A549 (cell line): ENCODE measurements at regions of chr1 and their contacts with region 1.

Region 1: DNA sequence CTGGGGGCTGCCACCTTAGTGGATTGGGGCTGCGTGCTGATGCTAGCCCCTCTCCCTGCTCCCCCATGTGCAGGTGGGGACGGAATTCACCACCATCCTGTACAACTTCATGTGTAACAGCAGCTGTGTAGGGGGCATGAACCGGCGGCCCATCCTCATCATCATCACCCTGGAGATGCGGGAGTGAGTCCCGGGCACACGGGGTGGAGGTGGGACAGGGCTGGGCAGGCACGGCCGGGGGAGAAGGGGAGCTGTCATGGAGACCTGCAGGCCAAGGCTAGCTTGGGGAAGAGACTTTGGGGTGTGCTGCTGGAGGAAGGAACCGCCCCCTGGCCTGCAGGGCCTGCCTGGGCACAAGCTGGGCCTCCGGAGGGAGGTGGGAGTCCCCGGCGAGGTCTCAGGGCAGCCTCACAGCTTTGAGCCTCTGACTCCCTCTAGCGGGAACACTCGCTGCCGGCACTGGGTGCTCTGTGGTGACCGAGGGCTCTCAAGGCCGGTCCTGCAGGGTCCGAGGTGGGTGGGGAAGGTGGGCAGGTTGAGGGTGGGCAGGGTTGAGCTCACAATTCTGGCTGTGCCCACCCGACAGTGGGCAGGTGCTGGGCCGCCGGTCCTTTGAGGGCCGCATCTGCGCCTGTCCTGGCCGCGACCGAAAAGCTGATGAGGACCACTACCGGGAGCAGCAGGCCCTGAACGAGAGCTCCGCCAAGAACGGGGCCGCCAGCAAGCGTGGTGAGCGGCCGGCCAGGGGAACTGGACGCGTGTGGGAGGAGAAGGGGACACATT is 25.0 kb upstream of the CCDC27 start:
- DNase-seq: peak; percentile 53 to 75
- ATAC-seq: peak; percentile 69 to 88
- H3K4me3 ChIP-seq: no peak overlapping the region
- H3K27ac ChIP-seq: no peak overlapping the region
- H3K4me1 ChIP-seq: no peaks in the 10 kb centered on the region
- CTCF ChIP-seq: peak; percentile 25; the same call in 2 of the 3 replicates
- EP300 ChIP-seq: no peak
- POLR2A ChIP-seq: no peak
- RAD21 ChIP-seq: peak in 1 of 2 experiments; percentile 32; a peak in 2 of 5 replicates

Region 2: DNA sequence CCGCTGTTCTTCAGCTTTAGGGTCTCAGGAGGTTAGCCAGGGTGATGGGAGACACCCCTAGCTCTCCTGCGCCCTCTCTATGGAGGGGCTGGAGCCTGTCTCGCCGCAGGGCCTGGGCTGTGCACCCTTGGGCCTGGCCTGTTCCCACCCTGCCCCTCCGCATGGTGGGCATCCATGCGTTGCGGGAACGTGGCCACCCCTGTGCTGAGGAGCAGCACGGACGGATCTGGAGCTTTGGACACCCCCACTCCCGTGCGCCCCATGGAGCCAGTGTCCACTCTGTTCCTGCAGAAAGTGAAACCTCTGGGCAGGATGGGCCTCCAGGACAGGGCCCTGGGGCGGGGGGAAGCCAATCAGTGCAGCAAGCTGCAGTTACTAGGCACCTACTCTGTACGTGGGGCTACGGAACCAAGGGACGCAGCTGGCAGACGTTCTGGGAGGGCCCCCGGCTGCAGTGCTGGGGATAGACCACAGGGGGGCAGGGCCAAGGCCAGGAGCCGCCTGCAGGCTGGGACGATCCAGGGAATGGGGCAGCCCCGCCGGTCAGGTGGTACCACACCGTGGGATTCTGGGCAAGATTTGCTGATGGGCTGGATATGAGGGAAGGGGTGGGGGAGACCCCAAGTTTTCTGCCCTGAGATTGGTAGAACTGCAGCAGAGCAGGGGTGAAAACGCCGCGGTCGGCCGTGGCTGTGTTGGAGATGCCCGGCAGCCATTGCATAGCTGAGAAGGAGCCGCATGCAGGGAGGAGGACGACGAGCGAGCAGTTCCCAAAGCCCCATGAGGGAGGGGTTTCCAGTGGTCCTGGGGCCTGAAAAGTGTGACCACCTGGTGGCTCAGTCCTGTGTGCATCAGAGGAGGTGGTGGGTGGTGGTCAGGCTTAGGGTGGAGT is 31.7 kb before region 1 on chr1:
- CTCF ChIA-PET with region 1: interaction called, 17 read pairs
- POLR2A ChIA-PET with region 1: interaction called, 3 read pairs
- DNase-seq: peak; percentile 40 to 76
- ATAC-seq: peak; percentile 91 to 98
- H3K4me3 ChIP-seq: peak overlapping the region; percentile 39
- H3K27ac ChIP-seq: peak overlapping the region; percentile 29 to 79; a peak in 5 of 6 replicates
- H3K4me1 ChIP-seq: no peaks in the 10 kb centered on the region; the same call in 2 of the 3 replicates
- CTCF ChIP-seq: peak; percentile 53
- EP300 ChIP-seq: no peak
- POLR2A ChIP-seq: no peak
- RAD21 ChIP-seq: peak; percentile 29 to 37; a peak in 3 of 5 replicates

Region 3: DNA sequence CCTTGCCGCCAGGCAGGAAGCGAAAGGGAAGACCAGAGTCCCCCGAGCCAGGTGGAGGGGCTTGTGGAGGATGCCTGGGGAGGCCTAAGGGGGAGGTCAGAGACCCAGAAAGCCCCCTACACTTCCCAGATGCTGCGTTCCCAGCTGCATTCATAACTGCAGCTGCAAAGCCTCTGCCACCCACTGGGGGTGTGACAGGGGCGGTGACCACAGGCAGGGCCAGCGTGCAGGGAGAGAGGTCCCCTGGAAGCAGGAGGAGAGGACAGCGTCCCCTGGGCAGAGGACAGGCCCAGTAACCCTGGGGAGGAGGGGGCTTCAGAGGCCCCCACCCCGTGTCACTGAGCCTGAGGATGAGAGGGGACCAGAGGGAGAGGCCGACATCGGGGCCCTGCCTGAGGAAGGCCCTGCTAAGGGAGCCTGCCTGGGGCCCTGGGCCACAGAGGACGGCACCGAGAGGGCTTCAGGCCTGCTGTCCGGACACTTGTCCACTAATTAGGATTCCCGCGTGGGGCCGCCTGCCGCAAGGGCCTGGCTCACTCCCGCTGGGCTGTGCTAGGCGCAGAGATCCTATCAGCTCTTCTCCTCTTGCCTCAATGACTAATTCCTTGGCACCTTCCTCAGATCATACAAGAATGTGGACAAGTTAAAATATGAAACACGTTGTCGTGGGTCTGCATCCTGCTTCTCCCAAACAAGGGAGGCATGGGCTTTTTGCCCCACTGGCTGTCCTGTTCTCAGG is 24.1 kb before region 1 on chr1:
- CTCF ChIA-PET with region 1: interaction called, 12 read pairs
- POLR2A ChIA-PET with region 1: no interaction called
- DNase-seq: no peak
- ATAC-seq: peak in 1 of 2 experiments; percentile 29; a peak in 2 of 6 replicates
- H3K4me3 ChIP-seq: no peak overlapping the region
- H3K27ac ChIP-seq: no peak overlapping the region
- H3K4me1 ChIP-seq: no peaks in the 10 kb centered on the region
- CTCF ChIP-seq: no peak
- EP300 ChIP-seq: no peak
- POLR2A ChIP-seq: no peak
- RAD21 ChIP-seq: no peak

Region 4: DNA sequence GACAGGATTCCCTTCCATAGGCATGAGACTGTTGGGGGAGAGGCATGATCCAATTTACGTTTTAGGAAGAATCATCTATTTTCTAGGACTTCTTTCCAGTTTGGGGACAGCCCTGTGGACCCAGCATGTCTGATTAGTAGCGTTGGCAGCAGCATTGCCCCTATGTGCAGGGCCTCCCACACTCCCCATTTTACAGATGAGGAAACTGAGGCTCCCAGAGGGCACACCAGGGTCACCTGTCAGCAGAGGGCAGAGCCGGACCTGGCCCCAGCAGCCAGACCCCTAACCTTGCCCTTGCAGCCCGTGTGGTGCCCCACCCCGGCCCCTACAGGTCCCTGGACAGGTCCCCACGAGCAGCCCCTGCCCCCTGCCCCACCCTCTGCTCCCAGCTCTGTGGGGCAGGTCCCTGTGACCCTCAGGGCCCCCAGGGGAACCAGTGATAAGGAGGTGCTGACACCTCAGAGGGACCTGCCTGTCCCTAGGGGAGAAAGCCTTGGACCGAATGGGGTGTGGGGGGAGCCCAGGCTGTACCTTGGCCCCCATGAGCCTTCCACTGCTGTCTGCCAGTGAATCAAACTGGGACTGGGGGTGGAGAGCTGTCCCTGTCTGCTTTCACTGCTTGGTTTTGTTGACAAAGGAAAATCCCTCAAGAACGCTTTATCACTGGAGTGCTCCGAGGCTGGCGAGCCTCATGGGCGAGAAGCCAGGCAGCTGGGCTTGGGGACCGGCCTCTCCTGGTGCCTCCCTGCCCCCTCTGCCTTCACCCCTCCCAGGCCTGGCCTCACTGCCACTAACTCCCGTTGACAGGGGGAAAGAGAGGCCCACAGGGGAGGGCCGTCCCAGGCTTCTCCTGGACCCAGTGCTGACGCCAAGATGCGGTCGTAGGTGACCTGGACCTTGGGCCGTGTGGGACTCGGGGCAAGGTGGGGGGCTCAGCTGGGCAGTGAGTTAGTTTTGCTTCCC is 14.4 kb before region 1 on chr1:
- CTCF ChIA-PET with region 1: interaction called, 22 read pairs
- POLR2A ChIA-PET with region 1: no interaction called
- DNase-seq: no peak
- ATAC-seq: no peak
- H3K4me3 ChIP-seq: no peak overlapping the region
- H3K27ac ChIP-seq: no peak overlapping the region
- H3K4me1 ChIP-seq: no peaks in the 10 kb centered on the region
- CTCF ChIP-seq: no peak
- EP300 ChIP-seq: no peak
- POLR2A ChIP-seq: no peak
- RAD21 ChIP-seq: no peak

Region 5: DNA sequence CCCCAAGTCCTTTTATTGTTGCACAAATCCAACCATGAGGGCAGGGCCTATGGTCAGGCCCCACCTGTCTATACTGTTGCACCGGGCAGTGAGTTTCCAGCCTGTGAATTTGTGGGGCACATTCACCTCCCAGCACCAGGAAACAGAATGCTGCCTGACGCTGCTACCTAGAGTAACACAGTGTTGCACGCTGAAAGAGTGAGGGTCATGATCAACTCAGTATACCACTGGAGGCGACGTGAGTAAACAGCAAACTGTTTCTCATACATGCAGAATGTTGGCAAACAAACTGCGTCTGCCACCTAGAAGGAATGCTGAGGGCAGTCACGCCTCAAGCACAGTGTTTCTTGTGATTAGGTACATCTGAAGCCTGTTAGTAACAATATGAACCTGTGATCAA is 82.4 kb after region 1 on chr1:
- CTCF ChIA-PET with region 1: no interaction called
- POLR2A ChIA-PET with region 1: no interaction called
- DNase-seq: peak in 1 of 2 experiments; percentile 33
- ATAC-seq: peak; percentile 58 to 74; a peak in 5 of 6 replicates
- H3K4me3 ChIP-seq: no peak overlapping the region
- H3K27ac ChIP-seq: no peak overlapping the region
- H3K4me1 ChIP-seq: 0 out of 3 replicates have a peak, but pooled peaks cover 3% of the 10 kb centered on the region
- CTCF ChIP-seq: no peak
- EP300 ChIP-seq: no peak
- POLR2A ChIP-seq: no peak
- RAD21 ChIP-seq: no peak